CD8-positive, alpha-beta T cell (primary cell): ENCODE measurements at regions of chrX and their contacts with region 1.

Region 1: GRCh38 chrX:54182864-54183608 is at the start of gene FAM120C:
- DNase-seq: peak; percentile 26 to 83 (median 59)
- ATAC-seq: peak; percentile 70
- H3K4me3 ChIP-seq: peak within 1 kb of the TSS; percentile 60 to 72
- H3K4me3 Mint-ChIP-seq: peak within 1 kb of the TSS; percentile 78
- H3K27ac ChIP-seq: peak within 1 kb of the TSS; percentile 75 to 83
- H3K27ac Mint-ChIP-seq: peak within 1 kb of the TSS; percentile 88
- H3K4me1 ChIP-seq: peaks cover 38% of the 10 kb centered on the region
- H3K4me1 Mint-ChIP-seq: peaks cover 43% of the 10 kb centered on the region
- H3K27me3 ChIP-seq: no peaks in the 10 kb centered on the region
- H3K27me3 Mint-ChIP-seq: no peaks in the 10 kb centered on the region
- CTCF ChIP-seq: no peak
- total RNA-seq, gene FAM120C: 10.9 to 11.1 TPM

Region 2: GRCh38 chrX:54529552-54530357 is 346.7 kb after region 1 on chrX and contains the start of gene GNL3L:
- CTCF ChIA-PET with region 1: no interaction called
- POLR2A ChIA-PET with region 1: no interaction called
- intact Hi-C with region 1: loop called (anchors 1 to 5 kb)
- DNase-seq: peak; percentile 55 to 89 (median 78)
- ATAC-seq: peak; percentile 83
- H3K4me3 ChIP-seq: peak within 1 kb of the TSS; percentile 85 to 95
- H3K4me3 Mint-ChIP-seq: peak within 1 kb of the TSS; percentile 97
- H3K27ac ChIP-seq: peak within 1 kb of the TSS; percentile 79 to 94
- H3K27ac Mint-ChIP-seq: peak within 1 kb of the TSS; percentile 97
- H3K4me1 ChIP-seq: peaks cover 22% of the 10 kb centered on the region
- H3K4me1 Mint-ChIP-seq: peaks cover 40% of the 10 kb centered on the region
- H3K27me3 ChIP-seq: no peaks in the 10 kb centered on the region
- H3K27me3 Mint-ChIP-seq: no peaks in the 10 kb centered on the region
- CTCF ChIP-seq: no peak
- total RNA-seq, gene GNL3L: 20.9 to 24.0 TPM